Right ventricle myocardium superior (tissue), 1 donor: ENCODE measurements at regions of chr2 and their contacts with region 1.

Region 1: DNA sequence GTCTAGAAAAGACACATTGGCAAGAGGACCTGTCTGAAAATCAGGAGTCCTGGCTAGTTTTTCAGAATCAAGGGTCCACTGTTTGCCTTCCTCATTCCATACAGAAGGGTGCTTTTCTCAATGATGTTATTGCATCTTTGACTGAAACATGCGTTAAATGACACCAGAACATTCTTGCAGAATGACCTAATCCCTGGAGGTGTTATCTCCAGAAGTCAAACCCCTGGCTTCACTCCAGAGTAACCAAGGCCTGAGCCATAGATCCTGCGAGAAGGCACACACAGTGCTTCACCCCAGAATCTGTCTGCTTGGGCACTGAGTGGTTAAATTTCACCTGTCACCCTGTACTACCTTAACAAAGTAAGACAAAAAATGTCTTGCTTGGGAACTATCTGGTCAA is 1055.2 kb upstream of the FANCL start:
- DNase-seq: no peak
- ATAC-seq: no peak

Region 2: GRCh38 chr2:59761966-59762365 is 465.7 kb after region 1 on chr2:
- intact Hi-C with region 1: no loop called
- DNase-seq: no peak
- ATAC-seq: no peak

Region 3: DNA sequence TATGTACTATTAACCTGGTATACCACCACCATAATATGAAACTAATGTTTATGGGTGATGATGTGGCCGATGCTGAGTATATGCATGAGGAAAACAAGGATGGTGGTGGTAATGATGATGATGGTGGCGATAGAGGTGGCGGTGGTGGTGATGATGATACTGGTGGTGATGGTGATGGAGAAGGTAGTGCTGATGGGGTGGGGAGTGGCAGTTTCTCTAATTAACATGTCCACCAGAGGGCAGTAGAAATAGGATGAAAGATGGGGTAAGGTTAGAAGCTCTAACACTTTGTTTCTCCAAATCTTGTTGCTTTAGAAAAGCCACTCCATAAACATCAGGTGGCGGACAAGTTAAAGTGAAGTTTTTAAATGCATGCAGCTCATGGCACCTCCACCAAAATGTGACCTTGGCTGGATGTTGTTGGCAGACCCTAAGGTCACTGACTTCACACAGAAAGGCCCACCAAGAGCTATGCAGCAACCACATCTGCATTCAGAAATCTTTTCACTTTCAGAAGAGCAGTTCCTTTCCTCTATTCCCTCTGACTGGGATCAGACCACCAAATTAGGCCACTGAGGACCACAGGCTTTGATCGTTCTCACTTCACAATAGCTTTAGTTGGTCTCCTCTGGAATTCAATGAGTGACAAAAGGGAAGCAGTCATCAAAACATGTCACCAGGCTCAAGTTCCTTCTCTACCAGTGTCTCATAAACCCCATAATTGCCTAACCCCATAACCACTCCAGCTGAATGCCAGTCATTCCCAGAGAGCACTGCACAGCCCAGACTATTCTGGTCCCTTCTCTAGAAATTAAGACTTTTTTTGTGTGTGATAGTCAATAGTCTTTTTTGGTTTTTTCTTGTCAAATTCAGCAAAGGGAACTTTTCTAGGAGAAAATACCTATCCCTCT is 1264.7 kb after region 1 on chr2:
- intact Hi-C with region 1: loop called (anchors 10 kb)
- DNase-seq: no peak
- ATAC-seq: peak; percentile 78